CD4-positive, alpha-beta memory T cell (primary cell): ENCODE measurements at regions of chr11 and their contacts with region 1.

Region 1: GRCh38 chr11:88770475-88771079 is 295.2 kb downstream of the GRM5 start:
- DNase-seq: no peak
- H3K4me3 ChIP-seq: no peak overlapping the region
- H3K4me3 Mint-ChIP-seq: no peak overlapping the region
- H3K27ac ChIP-seq: no peak overlapping the region
- H3K27ac Mint-ChIP-seq: no peak overlapping the region
- H3K4me1 ChIP-seq: no peaks in the 10 kb centered on the region
- H3K4me1 Mint-ChIP-seq: no peaks in the 10 kb centered on the region
- H3K27me3 ChIP-seq: no peaks in the 10 kb centered on the region
- H3K27me3 Mint-ChIP-seq: no peaks in the 10 kb centered on the region

Region 2: GRCh38 chr11:88849368-88849767 is 78.8 kb after region 1 on chr11:
- CTCF ChIA-PET with region 1: no interaction called
- POLR2A ChIA-PET with region 1: no interaction called
- intact Hi-C with region 1: loop called (anchors 10 kb)
- DNase-seq: no peak
- H3K4me3 ChIP-seq: no peak overlapping the region
- H3K4me3 Mint-ChIP-seq: no peak overlapping the region
- H3K27ac ChIP-seq: no peak overlapping the region
- H3K27ac Mint-ChIP-seq: no peak overlapping the region
- H3K4me1 ChIP-seq: peaks cover 9% of the 10 kb centered on the region
- H3K4me1 Mint-ChIP-seq: peaks cover 11 to 17% (median 13%) of the 10 kb centered on the region in 4 donors
- H3K27me3 ChIP-seq: no peaks in the 10 kb centered on the region
- H3K27me3 Mint-ChIP-seq: no peaks in the 10 kb centered on the region